Motor neuron (in vitro differentiated cells): ENCODE measurements at regions of chr15 and their contacts with region 1.

Region 1: GRCh38 chr15:37134699-37135131 is 34.4 kb upstream of the MEIS2 start:
- ATAC-seq: peak in 3 of 8 experiments; percentile 70 to 73 (median 70)
- H3K4me3 ChIP-seq: no peak overlapping the region
- H3K27ac ChIP-seq: no peak overlapping the region
- H3K4me1 ChIP-seq: peaks cover 0 to 18% of the 10 kb centered on the region in 2 donors

Region 2: GRCh38 chr15:37891766-37892368 is 757.2 kb after region 1 on chr15:
- in situ Hi-C with region 1: loop called in 1 of 9 experiments (anchors 25 kb)
- ATAC-seq: peak; percentile 75 to 90 (median 83)
- H3K4me3 ChIP-seq: no peak overlapping the region
- H3K27ac ChIP-seq: no peak overlapping the region
- H3K4me1 ChIP-seq: peaks cover 0 to 8% of the 10 kb centered on the region in 2 donors